Caco-2 (cell line): ENCODE measurements at regions of chr9 and their contacts with region 1.

Region 1: GRCh38 chr9:112112941-112113681 is 62.0 kb downstream of the SUSD1 start:
- DNase-seq: peak; percentile 78 to 80
- H3K4me3 ChIP-seq: no peak overlapping the region
- H3K4me3 Mint-ChIP-seq: no peak overlapping the region
- H3K27ac Mint-ChIP-seq: peak overlapping the region; percentile 53
- H3K4me1 ChIP-seq: peaks cover 39% of the 10 kb centered on the region
- H3K4me1 Mint-ChIP-seq: peaks cover 32% of the 10 kb centered on the region
- H3K27me3 ChIP-seq: no peaks in the 10 kb centered on the region
- H3K27me3 Mint-ChIP-seq: no peaks in the 10 kb centered on the region
- CTCF ChIP-seq: peak; percentile 80 to 81

Region 2: DNA sequence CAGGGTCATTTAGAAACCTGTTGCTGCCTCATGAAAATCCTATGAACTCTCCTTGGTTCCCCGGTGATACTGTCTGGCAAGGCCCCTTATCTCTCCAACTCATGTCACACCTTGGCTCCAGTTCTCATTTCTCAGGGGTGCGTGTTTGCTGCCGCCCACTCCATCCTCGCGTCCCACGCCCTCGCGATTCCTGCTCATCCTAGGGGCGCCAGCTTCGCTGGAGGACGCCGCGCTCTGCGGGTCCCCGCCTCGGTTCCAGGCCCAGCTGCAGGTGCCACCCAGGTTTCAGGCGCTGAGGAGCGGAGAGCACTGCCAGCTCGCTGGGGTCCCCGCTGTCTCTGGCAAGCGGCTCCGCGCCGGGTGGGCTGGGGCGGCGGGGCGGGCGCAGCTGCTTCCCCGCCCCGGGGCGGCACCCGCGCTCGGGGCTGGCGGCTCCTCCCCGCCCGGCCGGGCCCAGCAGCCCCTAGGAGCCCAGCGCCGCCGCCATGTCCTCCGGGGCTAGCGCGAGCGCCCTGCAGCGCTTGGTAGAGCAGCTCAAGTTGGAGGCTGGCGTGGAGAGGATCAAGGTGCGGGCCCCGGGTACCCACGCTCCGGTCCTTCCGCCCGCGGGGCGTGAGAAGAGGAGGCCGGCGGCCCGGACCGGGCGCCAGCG is 451.8 kb before region 1 on chr9 and contains the start of gene GNG10:
- CTCF ChIA-PET with region 1: no interaction called
- POLR2A ChIA-PET with region 1: no interaction called
- intact Hi-C with region 1: no loop called
- DNase-seq: peak; percentile 50 to 77
- H3K4me3 ChIP-seq: peak within 1 kb of the TSS; percentile 90
- H3K4me3 Mint-ChIP-seq: peak within 1 kb of the TSS; percentile 69
- H3K27ac Mint-ChIP-seq: peak within 1 kb of the TSS; percentile 83
- H3K4me1 ChIP-seq: peaks cover 19% of the 10 kb centered on the region
- H3K4me1 Mint-ChIP-seq: peaks cover 25% of the 10 kb centered on the region
- H3K27me3 ChIP-seq: no peaks in the 10 kb centered on the region
- H3K27me3 Mint-ChIP-seq: no peaks in the 10 kb centered on the region
- CTCF ChIP-seq: no peak
- total RNA-seq, gene GNG10: 52.2 and 54.0 TPM in 2 replicates

Region 3: GRCh38 chr9:112224401-112225289 is 111.5 kb after region 1 on chr9:
- CTCF ChIA-PET with region 1: no interaction called
- POLR2A ChIA-PET with region 1: no interaction called
- intact Hi-C with region 1: loop called (anchors 5 kb)
- DNase-seq: no peak
- H3K4me3 ChIP-seq: no peak overlapping the region
- H3K4me3 Mint-ChIP-seq: no peak overlapping the region
- H3K27ac Mint-ChIP-seq: no peak overlapping the region
- H3K4me1 ChIP-seq: no peaks in the 10 kb centered on the region
- H3K4me1 Mint-ChIP-seq: no peaks in the 10 kb centered on the region
- H3K27me3 ChIP-seq: no peaks in the 10 kb centered on the region
- H3K27me3 Mint-ChIP-seq: no peaks in the 10 kb centered on the region
- CTCF ChIP-seq: no peak